ENCODE measurements at regions of chr5 and their contacts with region 1.

Region 1: GRCh38 chr5:121386334-121386733 is 465.3 kb upstream of the FTMT start:
- DNase-seq: no peak
- H3K4me3 ChIP-seq: no peak overlapping the region
- H3K4me3 Mint-ChIP-seq: no peak overlapping the region
- H3K27ac ChIP-seq: no peak overlapping the region
- H3K27ac Mint-ChIP-seq: no peak overlapping the region
- H3K4me1 ChIP-seq: no peaks in the 10 kb centered on the region
- H3K4me1 Mint-ChIP-seq: no peaks in the 10 kb centered on the region
- H3K27me3 ChIP-seq: no peaks in the 10 kb centered on the region
- H3K27me3 Mint-ChIP-seq: no peaks in the 10 kb centered on the region

Region 2: GRCh38 chr5:121325930-121326329 is 60.4 kb before region 1 on chr5:
- CTCF ChIA-PET with region 1: no interaction called
- POLR2A ChIA-PET with region 1: no interaction called
- intact Hi-C with region 1: loop called (anchors 2 kb)
- DNase-seq: no peak
- H3K4me3 ChIP-seq: no peak overlapping the region
- H3K4me3 Mint-ChIP-seq: no peak overlapping the region
- H3K27ac ChIP-seq: no peak overlapping the region
- H3K27ac Mint-ChIP-seq: no peak overlapping the region
- H3K4me1 ChIP-seq: no peaks in the 10 kb centered on the region
- H3K4me1 Mint-ChIP-seq: no peaks in the 10 kb centered on the region
- H3K27me3 ChIP-seq: no peaks in the 10 kb centered on the region
- H3K27me3 Mint-ChIP-seq: no peaks in the 10 kb centered on the region

Region 3: DNA sequence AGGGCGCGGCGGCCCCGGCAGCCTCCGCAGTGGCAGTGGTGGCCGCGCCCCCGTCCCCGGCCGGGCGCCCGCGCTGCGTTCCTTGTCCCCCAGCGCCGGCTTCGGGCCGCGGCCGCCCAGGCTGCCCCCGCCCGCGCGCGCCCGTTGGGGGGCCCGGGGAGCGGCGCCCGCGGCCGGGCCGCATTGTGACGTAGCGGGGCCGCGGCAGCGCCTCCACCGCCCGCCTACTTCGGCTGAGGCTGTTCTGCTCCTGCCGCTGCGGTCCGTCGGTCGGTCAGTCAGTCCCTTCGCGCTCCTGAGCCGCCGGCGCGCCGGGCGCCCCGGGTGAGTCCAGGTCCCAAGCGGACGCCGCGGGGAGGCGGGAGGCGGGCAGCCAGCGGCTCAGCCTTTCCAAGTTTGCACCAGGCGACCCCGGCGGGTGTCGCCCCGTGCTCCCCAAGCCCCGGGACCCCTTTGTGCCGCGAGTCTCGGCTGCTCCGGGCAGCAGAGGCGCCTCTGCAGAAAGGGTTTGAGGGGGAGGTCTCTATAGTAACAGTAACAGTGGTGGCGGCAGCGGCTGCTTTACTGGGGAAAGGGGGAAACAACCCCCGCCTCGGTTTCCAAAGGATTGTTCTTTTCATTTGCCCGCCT is 925.7 kb after region 1 on chr5 and contains the start of gene SNCAIP:
- CTCF ChIA-PET with region 1: no interaction called
- POLR2A ChIA-PET with region 1: no interaction called
- intact Hi-C with region 1: no loop called
- DNase-seq: no peak
- H3K4me3 ChIP-seq: no peak within 1 kb of the TSS
- H3K4me3 Mint-ChIP-seq: peak within 1 kb of the TSS in 4 of 8 donors; percentile 4 to 67 (median 40)
- H3K27ac ChIP-seq: no peak within 1 kb of the TSS
- H3K27ac Mint-ChIP-seq: no peak within 1 kb of the TSS
- H3K4me1 ChIP-seq: peaks cover 8% of the 10 kb centered on the region
- H3K4me1 Mint-ChIP-seq: peaks cover 0 to 15% (median 3%) of the 10 kb centered on the region in 4 donors
- H3K27me3 ChIP-seq: peaks cover 17% of the 10 kb centered on the region
- H3K27me3 Mint-ChIP-seq: peaks cover 28 to 39% of the 10 kb centered on the region in 2 donors
- total RNA-seq, gene SNCAIP: not detected

Measured in CD4-positive, alpha-beta memory T cell (primary cell).